Pancreas (tissue), 10 donors: ENCODE measurements at regions of chr19 and their contacts with region 1.

Region 1: DNA sequence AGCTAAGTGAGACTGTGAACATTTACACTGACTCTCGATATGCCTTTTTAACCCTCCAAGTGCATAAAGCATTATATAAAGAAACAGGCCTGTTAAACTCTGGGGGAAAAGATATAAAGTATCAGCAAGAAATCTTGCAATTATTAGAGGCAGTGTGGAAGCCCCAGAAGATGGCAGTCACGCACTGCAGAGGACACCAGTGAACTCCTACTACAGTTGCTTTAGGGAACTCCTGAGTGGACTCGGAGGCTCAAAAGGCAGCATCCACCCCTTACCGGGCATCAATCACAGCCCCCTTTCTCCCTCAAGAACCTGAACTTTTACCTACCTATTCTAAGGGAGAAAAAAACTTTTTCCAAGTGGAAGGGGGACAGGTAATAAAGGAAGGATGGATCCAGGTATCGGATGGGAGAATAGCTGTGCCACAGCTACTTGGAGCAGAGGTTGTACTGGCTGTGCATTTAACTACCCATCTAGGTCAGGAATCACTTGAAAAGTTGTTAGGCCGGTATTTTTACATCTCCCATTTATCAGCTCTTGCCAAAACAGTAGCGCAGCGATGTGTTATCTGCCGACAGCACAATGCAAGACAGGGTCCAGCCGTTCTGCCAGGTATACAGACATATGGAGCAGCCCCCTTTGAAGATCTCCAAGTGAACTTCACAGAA is 80.1 kb downstream of the ZNF486 start:
- DNase-seq: peak in 4 of 6 donors; percentile 34 to 70 (median 47)
- ATAC-seq: peak; percentile 92 to 98 (median 96)
- H3K4me3 ChIP-seq: no peak overlapping the region
- H3K27ac ChIP-seq: no peak overlapping the region
- H3K4me1 ChIP-seq: peaks cover 0 to 5% (median 3%) of the 10 kb centered on the region in 3 donors
- H3K27me3 ChIP-seq: no peaks in the 10 kb centered on the region
- CTCF ChIP-seq: peak; percentile 24 to 53 (median 51)

Region 2: DNA sequence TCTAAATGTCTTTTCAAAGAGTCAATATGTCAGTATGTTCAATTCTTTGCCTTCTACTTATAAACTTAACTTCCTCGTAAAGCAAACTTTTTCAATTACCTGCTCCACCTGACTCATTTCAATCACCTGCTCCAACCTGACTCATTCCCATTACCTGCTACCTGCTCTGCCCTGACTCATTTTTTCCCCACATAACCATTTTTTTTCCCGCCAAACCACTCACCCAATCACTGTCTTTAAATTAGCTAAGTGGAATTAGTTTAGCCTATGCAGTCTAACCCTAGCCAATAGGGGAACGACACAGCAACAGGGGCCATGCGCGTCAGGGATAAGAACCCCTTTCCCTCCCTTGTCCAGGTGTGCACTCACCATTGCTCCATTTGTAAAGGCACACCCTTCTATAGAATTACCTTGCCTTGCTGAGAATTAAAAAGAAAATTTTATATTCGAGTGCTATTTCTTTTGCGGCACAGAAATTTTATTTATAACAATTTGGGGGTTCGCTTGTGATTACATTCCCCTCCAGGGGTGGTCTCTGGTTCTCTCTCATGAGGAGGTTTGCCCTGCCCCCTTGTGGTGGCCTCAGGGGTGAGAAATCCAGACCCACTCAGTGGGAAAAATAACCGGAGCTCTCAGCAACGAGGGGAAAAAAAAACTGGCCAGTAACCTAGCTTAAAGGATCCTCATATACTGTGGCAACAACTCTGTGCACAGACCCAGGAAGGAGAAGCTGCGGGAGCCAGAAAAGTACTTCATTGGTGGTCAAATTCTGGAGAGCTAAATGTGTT is 113.0 kb after region 1 on chr19:
- intact Hi-C with region 1: loop called in 2 of 3 experiments (anchors 5 to 10 kb)
- DNase-seq: peak in 5 of 6 donors; percentile 23 to 72 (median 49)
- ATAC-seq: peak; percentile 74 to 88 (median 78)
- H3K4me3 ChIP-seq: no peak overlapping the region
- H3K27ac ChIP-seq: no peak overlapping the region
- H3K4me1 ChIP-seq: peaks cover 0 to 4% (median 0%) of the 10 kb centered on the region in 3 donors
- H3K27me3 ChIP-seq: no peaks in the 10 kb centered on the region
- CTCF ChIP-seq: peak; percentile 20 to 45 (median 38)

Region 3: DNA sequence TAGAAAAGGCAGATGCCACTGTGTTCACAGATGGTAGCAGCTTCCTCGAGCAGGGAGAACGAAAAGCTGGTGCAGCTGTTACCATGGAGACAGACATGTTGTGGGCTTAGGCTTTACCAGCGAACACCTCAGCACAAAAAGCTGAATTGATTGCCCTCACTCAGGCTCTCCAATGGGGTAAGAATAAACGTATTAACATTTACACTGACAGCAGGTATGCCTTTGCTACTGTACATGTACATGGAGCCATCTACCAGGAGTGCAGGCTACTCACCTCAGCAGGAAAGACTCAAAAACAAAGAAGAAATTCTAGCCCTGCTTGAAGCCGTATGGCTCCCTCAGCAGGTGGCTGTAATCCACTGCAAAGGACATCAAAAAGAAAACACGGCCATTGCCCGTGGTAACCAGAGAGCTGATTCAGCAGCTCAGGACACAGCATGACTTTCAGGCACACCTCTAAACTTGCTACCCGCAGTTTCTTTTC is 120.7 kb after region 1 on chr19:
- intact Hi-C with region 1: loop called in 2 of 3 experiments (anchors 5 to 10 kb)
- DNase-seq: peak in 4 of 6 donors; percentile 48 to 67 (median 53)
- ATAC-seq: peak; percentile 91 to 94 (median 93)
- H3K4me3 ChIP-seq: peak overlapping the region in 1 of 4 donors; percentile 14
- H3K27ac ChIP-seq: peak overlapping the region in 1 of 4 donors; percentile 44
- H3K4me1 ChIP-seq: no peaks in the 10 kb centered on the region
- H3K27me3 ChIP-seq: no peaks in the 10 kb centered on the region
- CTCF ChIP-seq: peak in 1 of 4 donors; percentile 7